Left cardiac atrium (tissue), 4 donors: ENCODE measurements at regions of chr9 and their contacts with region 1.

Region 1: DNA sequence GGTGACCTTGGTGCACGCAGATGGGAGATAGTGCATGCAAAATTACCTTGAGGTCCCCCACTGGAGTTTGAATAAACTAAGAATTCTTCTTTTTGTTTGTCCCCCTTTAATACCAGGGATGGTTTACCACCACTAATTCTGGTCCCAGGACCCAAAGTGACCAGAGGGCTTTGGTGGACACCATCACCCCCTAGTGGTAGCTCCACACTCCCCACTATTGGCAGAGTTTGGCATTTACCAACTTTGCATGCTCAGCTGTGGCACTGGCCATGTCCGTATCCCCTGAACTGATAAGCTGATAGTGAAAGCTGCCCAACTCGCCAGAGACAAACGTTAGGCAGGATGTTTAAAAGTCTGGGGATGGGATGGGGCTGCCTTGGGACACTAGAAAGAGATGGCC is 3.3 kb downstream of the ASTN2 start:
- DNase-seq: peak; percentile 40
- ATAC-seq: peak in 1 of 2 donors; percentile 29

Region 2: DNA sequence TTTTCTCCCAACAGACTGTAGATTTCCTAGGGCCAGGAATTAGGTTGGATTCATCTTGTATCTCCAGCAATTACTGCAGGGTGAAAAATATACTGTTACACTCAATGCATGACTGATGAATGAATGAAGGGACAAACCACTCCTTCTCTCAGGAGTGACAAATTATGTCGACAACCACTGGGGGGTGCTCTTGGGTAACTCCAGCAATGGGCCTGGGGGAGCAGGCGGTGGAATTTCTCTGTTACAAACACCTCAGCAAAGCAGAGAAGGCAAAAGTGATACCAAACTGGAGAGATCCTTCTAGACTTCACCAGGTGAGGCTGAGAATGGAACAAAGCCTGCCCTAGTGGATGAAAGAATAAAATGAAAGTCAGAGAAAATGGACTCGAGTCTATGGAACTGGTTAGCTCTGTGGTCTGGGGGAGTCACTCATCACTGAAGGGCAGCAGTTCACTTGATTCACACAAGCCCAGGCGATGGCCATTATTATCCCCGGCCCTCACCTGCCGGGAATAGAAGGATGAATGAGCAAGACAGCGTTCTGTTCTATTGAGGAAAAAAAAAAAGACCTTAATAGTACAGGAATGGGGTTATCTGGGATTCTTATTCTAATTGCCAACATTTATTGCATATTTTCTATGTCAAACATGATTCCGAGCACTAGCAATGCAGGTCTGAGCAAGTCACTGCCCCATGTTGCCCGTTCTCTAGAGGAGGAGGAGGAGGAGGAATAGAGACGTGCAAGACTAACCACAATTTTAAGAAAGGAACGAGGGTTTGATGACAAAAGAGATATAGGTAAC is 337.8 kb before region 1 on chr9:
- intact Hi-C with region 1: loop called in 1 of 2 experiments (anchors 5 kb)
- DNase-seq: no peak
- ATAC-seq: no peak

Region 3: GRCh38 chr9:117160254-117160653 is 251.3 kb before region 1 on chr9:
- intact Hi-C with region 1: loop called in 1 of 2 experiments (anchors 5 kb)
- DNase-seq: no peak
- ATAC-seq: no peak